WTC11 (cell line): ENCODE measurements at regions of chr2 and their contacts with region 1.

Region 1: DNA sequence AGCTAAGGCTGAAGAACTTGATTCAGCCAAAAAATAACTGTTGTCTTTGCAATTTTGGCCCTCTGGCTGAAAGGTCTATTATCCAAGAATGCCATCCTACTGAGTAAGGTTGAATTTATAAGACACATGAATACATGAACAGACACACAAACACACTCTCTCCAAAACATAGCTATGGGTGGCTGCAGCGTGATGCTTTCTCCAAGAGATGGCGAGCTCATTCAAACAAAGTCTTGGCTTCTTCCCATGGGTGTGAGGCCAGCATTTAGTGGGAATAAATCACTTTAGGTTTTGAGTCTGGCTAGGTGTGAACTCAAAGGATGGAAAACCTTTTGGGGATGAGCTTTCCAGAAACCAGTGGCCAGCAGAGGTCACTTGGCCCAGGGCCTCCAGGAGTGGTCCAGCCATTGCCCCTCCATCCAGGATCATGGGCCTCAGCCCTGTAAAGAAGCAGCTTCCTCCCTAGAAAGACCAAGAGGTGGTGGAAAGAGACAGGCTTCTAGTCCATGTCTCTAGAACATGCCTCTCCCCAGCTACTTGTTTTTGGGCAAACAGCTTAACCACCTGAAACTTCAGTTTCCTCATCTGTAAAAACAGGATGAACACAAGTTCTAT is 11.0 kb upstream of the OSR1 start:
- DNase-seq: no peak
- ATAC-seq: peak; percentile 74
- H3K4me3 Mint-ChIP-seq: no peak overlapping the region
- H3K27ac Mint-ChIP-seq: no peak overlapping the region
- H3K4me1 Mint-ChIP-seq: no peaks in the 10 kb centered on the region
- H3K27me3 Mint-ChIP-seq: peaks cover 40% of the 10 kb centered on the region
- CTCF ChIP-seq: no peak

Region 2: GRCh38 chr2:18860179-18860578 is 509.3 kb before region 1 on chr2:
- CTCF ChIA-PET with region 1: no interaction called
- POLR2A ChIA-PET with region 1: no interaction called
- DNase-seq: no peak
- ATAC-seq: no peak
- H3K4me3 Mint-ChIP-seq: no peak overlapping the region
- H3K27ac Mint-ChIP-seq: no peak overlapping the region
- H3K4me1 Mint-ChIP-seq: no peaks in the 10 kb centered on the region
- H3K27me3 Mint-ChIP-seq: peaks cover 5% of the 10 kb centered on the region
- CTCF ChIP-seq: no peak

Region 3: DNA sequence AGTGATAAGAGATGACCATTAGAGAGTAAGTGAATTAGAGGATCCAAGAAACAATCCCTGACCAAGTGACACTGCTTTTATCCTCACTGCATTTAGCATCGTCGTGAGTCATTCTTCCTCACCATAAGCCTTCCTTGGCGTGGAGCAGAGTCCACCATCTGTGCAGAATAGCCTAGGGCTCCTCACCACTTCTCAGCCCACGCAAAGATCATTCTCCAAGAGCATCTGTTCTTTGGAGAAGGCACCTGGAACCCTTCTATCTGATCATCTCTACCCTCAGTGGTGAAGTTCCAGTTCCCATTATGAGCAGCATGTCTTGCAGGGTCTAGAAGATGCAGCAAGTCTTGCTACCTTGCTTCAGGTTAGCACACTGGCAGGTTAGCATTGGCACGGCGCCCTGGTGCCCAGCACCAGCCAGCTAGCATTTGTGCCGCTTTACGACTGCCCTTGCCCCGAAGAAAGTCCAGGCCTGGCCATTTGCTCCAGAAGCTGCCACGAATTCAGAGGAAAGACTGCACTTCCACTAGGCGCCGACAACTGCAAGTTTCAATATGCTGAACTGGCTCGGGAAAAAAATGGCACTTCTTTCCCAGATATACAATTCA is 306.5 kb after region 1 on chr2:
- CTCF ChIA-PET with region 1: interaction called, 10 read pairs
- POLR2A ChIA-PET with region 1: no interaction called
- DNase-seq: no peak
- ATAC-seq: no peak
- H3K4me3 Mint-ChIP-seq: no peak overlapping the region
- H3K27ac Mint-ChIP-seq: no peak overlapping the region
- H3K4me1 Mint-ChIP-seq: no peaks in the 10 kb centered on the region
- H3K27me3 Mint-ChIP-seq: no peaks in the 10 kb centered on the region
- CTCF ChIP-seq: no peak